ENCODE measurements at regions of chr9 and their contacts with region 1.

Region 1: GRCh38 chr9:98998441-98999151 is 54.9 kb downstream of the COL15A1 start:
- DNase-seq: no peak
- ATAC-seq: peak; percentile 92
- H3K4me3 ChIP-seq: no peak overlapping the region
- H3K27ac ChIP-seq: no peak overlapping the region
- H3K4me1 ChIP-seq: peaks cover 2% of the 10 kb centered on the region
- H3K27me3 ChIP-seq: 0 out of 4 replicates have a peak, but pooled peaks cover 0 to 2% of the 10 kb centered on the region in 2 experiments
- CTCF ChIP-seq: peak; percentile 76 to 96 (median 81)
- EP300 ChIP-seq: no peak
- POLR2A ChIP-seq: no peak
- RAD21 ChIP-seq: peak; percentile 62

Region 2: DNA sequence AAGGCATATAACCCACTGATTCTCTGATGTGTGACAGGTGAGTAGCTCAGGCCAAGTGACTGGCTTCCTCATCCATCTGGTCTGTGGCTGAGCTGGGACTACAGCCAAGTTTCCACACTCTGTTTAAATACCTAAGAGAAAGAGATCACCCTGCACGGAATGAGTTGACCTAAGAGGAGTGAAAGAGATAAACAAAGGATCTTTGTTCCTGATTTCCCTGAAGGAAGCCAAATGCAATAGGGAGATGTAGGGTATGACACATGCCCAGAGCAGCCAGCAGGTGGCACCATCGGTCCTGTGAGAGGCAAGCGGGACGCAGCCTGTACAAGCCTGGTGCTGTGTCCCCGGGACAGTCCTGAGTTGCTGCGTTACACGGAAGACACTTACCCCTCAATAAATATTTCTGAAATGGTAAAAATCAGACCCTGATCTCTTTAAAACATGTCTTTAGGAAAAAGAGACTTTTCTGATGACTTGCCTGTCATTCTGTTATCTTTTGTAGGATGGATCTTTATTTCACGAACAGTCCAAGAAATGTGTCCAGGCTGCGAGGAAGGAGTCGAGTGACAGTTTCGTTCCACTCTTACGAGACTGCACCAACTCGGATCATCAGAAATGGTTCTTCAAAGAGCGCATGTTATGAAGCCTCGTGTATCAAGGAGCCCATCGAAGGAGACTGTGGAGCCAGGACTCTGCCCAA is 150.0 kb before region 1 on chr9:
- CTCF ChIA-PET with region 1: interaction called, 108 read pairs
- POLR2A ChIA-PET with region 1: no interaction called
- RAD21 ChIA-PET with region 1: interaction called, 37 read pairs
- SMC1A ChIA-PET with region 1: interaction called, 15 read pairs
- in situ Hi-C with region 1: loop called (anchors 5 kb)
- intact Hi-C with region 1: loop called (anchors 1 kb)
- DNase-seq: peak; percentile 23
- ATAC-seq: peak; percentile 100
- H3K4me3 ChIP-seq: no peak overlapping the region
- H3K27ac ChIP-seq: no peak overlapping the region
- H3K4me1 ChIP-seq: no peaks in the 10 kb centered on the region
- H3K27me3 ChIP-seq: no peaks in the 10 kb centered on the region; a peak in 1 of 4 replicates
- CTCF ChIP-seq: peak; percentile 90 to 96 (median 94)
- EP300 ChIP-seq: no peak
- POLR2A ChIP-seq: no peak
- RAD21 ChIP-seq: peak; percentile 86

Region 3: DNA sequence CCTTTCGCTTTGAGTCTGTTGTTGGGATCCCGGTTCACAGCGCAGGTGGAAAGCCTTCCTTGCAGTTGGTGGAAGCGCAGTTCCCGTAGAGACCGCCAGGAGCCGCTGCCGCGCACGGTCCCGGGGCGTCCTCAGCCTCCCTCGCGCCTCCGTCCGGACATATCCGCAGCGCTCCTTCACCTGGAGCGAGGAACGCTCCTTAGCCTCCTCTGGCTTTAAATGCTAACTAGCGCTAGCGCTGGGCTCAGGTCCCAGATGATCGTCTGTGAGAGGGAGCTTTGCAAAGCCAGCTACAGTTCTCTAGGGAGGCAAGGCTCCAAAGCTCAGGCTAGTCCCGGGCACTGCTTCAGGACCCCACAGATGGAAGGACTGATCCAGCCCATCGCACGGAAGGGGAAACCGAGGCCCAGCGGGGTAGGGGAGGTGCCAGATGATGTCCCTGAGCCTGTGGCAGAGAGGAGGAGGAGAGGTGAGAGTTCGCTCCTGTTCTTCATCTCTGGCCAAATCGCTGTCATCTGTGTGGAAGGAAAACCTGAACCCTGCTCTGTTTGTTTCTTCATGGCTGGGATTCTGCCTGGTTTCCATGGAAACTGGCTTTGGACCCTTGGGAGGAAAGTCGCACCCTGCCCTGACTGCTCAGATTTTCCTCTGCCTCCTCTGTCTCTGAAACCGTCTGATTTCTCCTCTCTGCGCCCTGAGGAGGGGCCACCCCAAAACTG is 23.4 kb before region 1 on chr9:
- CTCF ChIA-PET with region 1: interaction called, 116 read pairs
- POLR2A ChIA-PET with region 1: no interaction called
- RAD21 ChIA-PET with region 1: interaction called, 24 read pairs
- SMC1A ChIA-PET with region 1: interaction called, 25 read pairs
- in situ Hi-C with region 1: no loop called
- intact Hi-C with region 1: loop called (anchors 1 kb)
- DNase-seq: no peak
- ATAC-seq: peak; percentile 97
- H3K4me3 ChIP-seq: no peak overlapping the region
- H3K27ac ChIP-seq: no peak overlapping the region
- H3K4me1 ChIP-seq: no peaks in the 10 kb centered on the region; the same call in 1 of the 2 replicates
- H3K27me3 ChIP-seq: peaks cover 7% of the 10 kb centered on the region in 2 experiments
- CTCF ChIP-seq: peak; percentile 98 to 99 (median 98); a peak in 5 of 6 replicates
- EP300 ChIP-seq: no peak
- POLR2A ChIP-seq: no peak
- RAD21 ChIP-seq: peak; percentile 78

Region 4: GRCh38 chr9:99012942-99013512 is 14.4 kb after region 1 on chr9:
- CTCF ChIA-PET with region 1: interaction called, 62 read pairs
- POLR2A ChIA-PET with region 1: no interaction called
- RAD21 ChIA-PET with region 1: interaction called, 6 read pairs
- SMC1A ChIA-PET with region 1: interaction called, 6 read pairs
- in situ Hi-C with region 1: no loop called
- intact Hi-C with region 1: no loop called
- DNase-seq: no peak
- ATAC-seq: peak; percentile 51
- H3K4me3 ChIP-seq: no peak overlapping the region
- H3K27ac ChIP-seq: no peak overlapping the region
- H3K4me1 ChIP-seq: no peaks in the 10 kb centered on the region
- H3K27me3 ChIP-seq: no peaks in the 10 kb centered on the region
- CTCF ChIP-seq: 0 out of 6 replicates have a peak, but pooled peaks of 1 of the 3 experiments have one; percentile 6
- EP300 ChIP-seq: no peak
- POLR2A ChIP-seq: no peak
- RAD21 ChIP-seq: 0 out of 2 replicates have a peak, but pooled peaks have one; percentile 16

Region 5: GRCh38 chr9:99150451-99151171 is 152.0 kb after region 1 on chr9:
- CTCF ChIA-PET with region 1: interaction called, 14 read pairs
- POLR2A ChIA-PET with region 1: no interaction called
- RAD21 ChIA-PET with region 1: interaction called, 3 read pairs
- SMC1A ChIA-PET with region 1: interaction called, 7 read pairs
- in situ Hi-C with region 1: no loop called
- intact Hi-C with region 1: no loop called
- DNase-seq: no peak
- ATAC-seq: no peak; the same call in 2 of the 3 replicates
- H3K4me3 ChIP-seq: no peak overlapping the region
- H3K27ac ChIP-seq: no peak overlapping the region
- H3K4me1 ChIP-seq: no peaks in the 10 kb centered on the region
- H3K27me3 ChIP-seq: no peaks in the 10 kb centered on the region
- CTCF ChIP-seq: no peak
- EP300 ChIP-seq: no peak
- POLR2A ChIP-seq: no peak
- RAD21 ChIP-seq: no peak

Measured in GM12878 (cell line).